ENCODE measurements at regions of chr6 and their contacts with region 1.

Region 1: GRCh38 chr6:42171813-42172581 is 1.2 kb upstream of the GUCA1A start:
- DNase-seq: no peak
- ATAC-seq: no peak
- H3K4me3 ChIP-seq: no peak overlapping the region
- H3K27ac ChIP-seq: no peak overlapping the region
- H3K4me1 ChIP-seq: peaks cover 0 to 5% of the 10 kb centered on the region in 2 experiments; a peak in 1 of 5 replicates
- H3K27me3 ChIP-seq: no peaks in the 10 kb centered on the region
- CTCF ChIP-seq: no peak
- EP300 ChIP-seq: no peak
- POLR2A ChIP-seq: no peak
- RAD21 ChIP-seq: no peak

Region 2: DNA sequence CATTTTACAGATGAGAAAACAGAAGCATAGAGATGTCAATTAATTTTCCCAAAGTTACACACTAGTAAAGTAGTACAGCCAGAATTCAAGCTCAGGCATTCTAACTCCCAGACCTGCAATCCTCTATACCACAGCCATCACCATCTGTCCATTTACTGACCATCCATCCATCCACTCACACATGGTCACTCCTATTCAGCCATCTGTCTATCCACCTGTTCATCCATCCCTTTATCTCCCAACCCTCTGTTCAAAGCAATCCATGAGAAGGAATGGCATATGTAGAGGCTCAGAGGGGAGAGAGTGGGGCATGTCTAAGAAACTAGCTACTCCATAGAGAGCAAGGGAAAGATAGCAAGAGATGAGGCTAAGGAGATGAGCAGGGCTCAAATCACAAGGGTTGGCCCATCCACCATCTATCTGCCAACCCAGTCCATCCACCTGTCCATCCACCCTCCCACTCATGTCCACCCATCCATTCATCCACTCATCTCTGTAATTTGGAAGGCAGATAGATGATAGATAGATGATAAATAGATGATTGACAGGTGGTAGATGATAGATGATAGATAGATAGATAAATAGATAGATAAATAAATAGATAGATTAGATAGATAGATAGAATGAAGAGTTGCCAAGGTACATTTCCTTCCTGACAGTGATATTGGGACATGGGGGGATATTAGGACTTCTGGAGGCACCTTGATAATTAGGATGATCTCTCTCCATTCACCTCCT is 17.4 kb before region 1 on chr6:
- CTCF ChIA-PET with region 1: no interaction called
- POLR2A ChIA-PET with region 1: no interaction called
- in situ Hi-C with region 1: no loop called
- intact Hi-C with region 1: no loop called
- DNase-seq: no peak
- ATAC-seq: no peak
- H3K4me3 ChIP-seq: no peak overlapping the region
- H3K27ac ChIP-seq: no peak overlapping the region
- H3K4me1 ChIP-seq: peaks cover 0 to 7% of the 10 kb centered on the region in 2 experiments; a peak in 3 of 5 replicates
- H3K27me3 ChIP-seq: peaks cover 4 to 25% of the 10 kb centered on the region in 2 experiments; a peak in 4 of 5 replicates
- CTCF ChIP-seq: no peak
- EP300 ChIP-seq: no peak
- POLR2A ChIP-seq: no peak
- RAD21 ChIP-seq: no peak

Region 3: GRCh38 chr6:42197555-42198362 is 25.8 kb after region 1 on chr6:
- CTCF ChIA-PET with region 1: no interaction called
- POLR2A ChIA-PET with region 1: interaction called, 11 read pairs
- in situ Hi-C with region 1: no loop called
- intact Hi-C with region 1: no loop called
- DNase-seq: peak; percentile 89 to 95 (median 90)
- ATAC-seq: peak; percentile 65
- H3K4me3 ChIP-seq: no peak overlapping the region
- H3K27ac ChIP-seq: peak overlapping the region; percentile 83
- H3K4me1 ChIP-seq: peaks cover 48 to 65% of the 10 kb centered on the region in 2 experiments
- H3K27me3 ChIP-seq: no peaks in the 10 kb centered on the region
- CTCF ChIP-seq: peak; percentile 10 to 16 (median 15); a peak in 1 of 6 replicates
- EP300 ChIP-seq: peak; percentile 97
- POLR2A ChIP-seq: peak; percentile 48
- RAD21 ChIP-seq: no peak